Right lobe of liver (tissue), 6 donors: ENCODE measurements at regions of chr5 and their contacts with region 1.

Region 1: DNA sequence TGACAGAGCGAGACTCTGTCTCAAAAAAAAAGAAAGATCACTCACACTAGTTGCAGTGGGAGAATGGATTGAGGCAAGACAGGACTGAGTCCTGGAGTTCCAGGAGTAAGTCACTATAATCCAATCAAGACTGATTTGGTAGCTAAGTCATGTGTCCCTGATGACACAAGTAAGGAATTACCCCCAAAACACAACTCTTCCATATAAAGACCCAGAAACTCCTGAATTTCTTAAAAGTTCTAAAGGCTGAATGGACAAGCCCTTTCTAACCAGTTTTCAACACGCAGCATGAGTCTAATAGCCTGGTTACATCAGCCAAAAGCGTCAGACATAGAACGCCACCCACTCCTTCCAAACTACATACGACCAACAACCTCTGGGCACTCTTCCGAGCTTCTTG is 2.5 kb downstream of the ZFP62 start:
- DNase-seq: no peak
- ATAC-seq: no peak
- H3K4me3 ChIP-seq: no peak overlapping the region
- H3K27ac ChIP-seq: no peak overlapping the region
- H3K4me1 ChIP-seq: peaks cover 0 to 8% (median 0%) of the 10 kb centered on the region in 4 donors
- H3K27me3 ChIP-seq: no peaks in the 10 kb centered on the region
- CTCF ChIP-seq: no peak
- POLR2A ChIP-seq: no peak

Region 2: DNA sequence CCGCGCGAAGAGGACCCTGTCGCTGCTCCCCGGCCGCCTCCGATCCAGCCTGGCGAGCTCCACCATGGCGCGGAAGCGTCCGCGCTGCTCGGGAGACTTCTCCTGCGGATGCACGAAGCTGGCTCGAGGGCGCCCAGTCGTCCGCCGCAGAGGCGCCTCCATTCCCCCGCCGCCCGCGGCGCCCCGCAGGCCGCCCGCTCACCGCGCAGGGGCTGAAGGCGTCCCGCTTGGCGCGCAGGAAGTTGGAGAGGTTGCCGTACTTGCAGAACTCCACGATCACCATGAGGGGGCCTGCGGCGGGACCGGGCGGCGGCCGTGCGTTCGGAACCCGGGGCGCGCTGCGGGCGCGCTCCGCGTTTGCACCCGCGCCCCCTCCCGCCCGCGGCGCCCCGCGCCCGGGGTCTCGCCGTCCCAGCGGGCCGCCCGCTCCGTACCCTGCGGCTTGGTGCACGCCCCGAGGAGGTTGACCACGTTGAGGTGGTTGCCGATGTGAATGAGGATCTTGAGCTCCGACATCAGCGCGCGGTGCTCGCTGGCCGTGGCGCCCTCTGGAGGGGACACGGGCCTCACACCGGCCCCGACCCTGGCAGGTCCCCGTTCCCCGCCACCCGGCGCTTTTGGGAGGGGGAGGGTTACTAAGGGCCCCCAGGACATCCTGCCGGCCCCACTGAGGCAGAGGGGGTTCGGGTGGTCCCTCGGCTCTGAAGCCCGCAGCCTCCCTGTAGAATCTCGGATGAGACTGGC is 239.6 kb before region 1 on chr5:
- intact Hi-C with region 1: no loop called
- DNase-seq: no peak
- ATAC-seq: no peak
- H3K4me3 ChIP-seq: no peak overlapping the region
- H3K27ac ChIP-seq: no peak overlapping the region
- H3K4me1 ChIP-seq: no peaks in the 10 kb centered on the region
- H3K27me3 ChIP-seq: no peaks in the 10 kb centered on the region
- CTCF ChIP-seq: peak in 3 of 4 donors; percentile 4 to 27 (median 6)
- POLR2A ChIP-seq: no peak

Region 3: DNA sequence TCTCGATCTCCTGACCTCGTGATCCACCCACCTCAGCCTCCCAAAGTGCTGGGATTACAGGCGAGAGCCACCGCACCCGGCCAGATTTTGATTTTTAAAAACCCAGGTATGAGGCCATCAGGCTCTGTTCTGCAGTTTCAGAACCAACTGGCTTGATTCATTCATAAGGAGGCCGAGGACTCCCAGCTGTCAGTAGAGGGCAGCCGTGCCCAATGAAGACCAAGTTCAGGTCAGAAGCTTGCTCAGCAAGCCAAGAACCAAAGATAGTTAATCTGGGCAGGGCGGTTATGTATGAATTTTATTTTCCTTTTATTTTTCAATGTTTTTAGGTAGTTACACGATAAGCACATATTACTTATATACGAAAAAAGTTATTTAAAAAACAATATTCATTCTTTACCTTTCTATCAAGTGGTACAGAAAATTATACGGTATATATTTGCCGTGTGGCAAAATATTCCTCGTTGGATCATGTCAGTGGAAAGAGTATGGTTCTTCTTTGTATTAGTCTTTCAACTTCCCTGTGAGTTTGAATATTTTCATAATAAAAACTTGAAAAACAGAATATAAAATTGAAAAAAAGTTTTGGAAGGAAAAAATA is 74.0 kb before region 1 on chr5:
- intact Hi-C with region 1: loop called in 1 of 2 experiments (anchors 5 kb)
- DNase-seq: peak; percentile 76 to 83 (median 78)
- ATAC-seq: peak; percentile 80 to 81 (median 81)
- H3K4me3 ChIP-seq: no peak overlapping the region
- H3K27ac ChIP-seq: no peak overlapping the region
- H3K4me1 ChIP-seq: peaks cover 0 to 11% (median 0%) of the 10 kb centered on the region in 4 donors
- H3K27me3 ChIP-seq: no peaks in the 10 kb centered on the region
- CTCF ChIP-seq: peak; percentile 65 to 81 (median 75)
- POLR2A ChIP-seq: no peak